Activated T-helper 1 cell treated with anti-CD3 and anti-CD28 coated beads, Interleukin-12 subunit alpha, Interleukin-12 subunit beta, Interleukin-2, Interleukin-4 antibody, amounts not matched to agents 30 ng/mL and 10 ng/mL and 1 ng/mL, durations not matched to agents 14 hours and 24 hours and 36 hours (primary cell): ENCODE measurements at regions of chr3 and their contacts with region 1.

Region 1: DNA sequence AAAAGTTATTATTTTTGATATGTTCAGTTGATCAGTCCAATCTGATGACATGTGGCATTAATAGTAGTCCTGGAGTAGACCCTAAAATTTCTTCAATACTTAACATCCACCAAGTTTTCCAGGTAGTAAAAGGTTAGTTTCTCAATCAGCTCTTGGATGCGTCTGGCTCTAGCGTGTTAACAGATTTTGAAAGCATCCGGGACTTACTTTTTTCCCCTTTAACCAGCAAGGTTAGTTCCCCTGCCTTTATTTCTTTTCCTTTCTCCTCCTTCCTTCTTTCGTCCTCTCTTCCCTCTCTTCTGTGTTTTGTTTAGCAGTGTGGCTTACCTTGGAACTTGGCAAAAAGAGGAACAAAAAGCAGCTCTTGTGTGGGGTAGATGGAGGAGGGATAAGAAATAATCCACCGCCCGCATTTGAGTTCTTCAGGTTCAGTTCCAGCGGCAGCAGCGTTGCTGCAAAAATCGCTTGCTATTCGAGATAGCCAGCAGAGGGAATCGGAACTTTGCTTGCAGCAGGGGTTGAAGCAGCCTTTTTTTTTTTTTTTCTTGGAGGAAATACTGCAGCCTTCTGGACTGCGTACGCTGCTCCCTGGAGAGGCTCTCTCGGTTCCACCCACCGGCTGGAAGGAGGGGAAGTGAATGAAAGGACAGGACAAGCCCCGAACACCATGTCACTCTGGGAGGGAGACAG is at the start of gene RBMS3:
- DNase-seq: no peak
- H3K4me3 Mint-ChIP-seq: peak within 1 kb of the TSS; percentile 87
- H3K27ac Mint-ChIP-seq: peak within 1 kb of the TSS; percentile 87
- H3K4me1 Mint-ChIP-seq: peaks cover 42% of the 10 kb centered on the region
- H3K27me3 Mint-ChIP-seq: peaks cover 6% of the 10 kb centered on the region
- total RNA-seq, gene RBMS3: 3.4 and 3.7 TPM in 2 replicates

Region 2: GRCh38 chr3:28840976-28841376 is 439.6 kb before region 1 on chr3:
- intact Hi-C with region 1: loop called (anchors 1 kb)
- DNase-seq: peak; percentile 1
- H3K4me3 Mint-ChIP-seq: no peak overlapping the region
- H3K27ac Mint-ChIP-seq: peak overlapping the region; percentile 56
- H3K4me1 Mint-ChIP-seq: peaks cover 28% of the 10 kb centered on the region
- H3K27me3 Mint-ChIP-seq: no peaks in the 10 kb centered on the region

Region 3: DNA sequence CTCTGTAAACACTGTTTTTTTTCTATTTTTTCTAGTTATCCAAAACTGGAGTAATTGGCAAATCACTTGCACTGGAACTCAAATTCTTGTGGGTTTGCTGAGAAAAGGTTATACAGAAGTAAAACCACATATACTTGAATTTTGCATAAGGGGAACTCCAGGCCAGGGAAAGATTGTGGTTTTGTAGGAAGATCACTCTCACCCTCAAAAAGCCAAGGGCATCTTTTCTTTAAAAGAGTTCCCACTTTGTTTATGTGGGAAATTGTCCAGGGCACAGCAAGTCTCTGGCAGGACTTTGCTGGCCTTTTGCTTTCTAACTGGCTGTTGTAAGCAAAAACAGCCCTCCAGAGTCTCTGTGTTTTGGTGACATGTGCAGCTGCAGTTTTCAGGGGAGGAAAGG is 340.0 kb before region 1 on chr3:
- intact Hi-C with region 1: loop called (anchors 1 kb)
- DNase-seq: no peak
- H3K4me3 Mint-ChIP-seq: peak overlapping the region; percentile 32
- H3K27ac Mint-ChIP-seq: peak overlapping the region; percentile 37
- H3K4me1 Mint-ChIP-seq: peaks cover 38% of the 10 kb centered on the region
- H3K27me3 Mint-ChIP-seq: peaks cover 17% of the 10 kb centered on the region

Region 4: DNA sequence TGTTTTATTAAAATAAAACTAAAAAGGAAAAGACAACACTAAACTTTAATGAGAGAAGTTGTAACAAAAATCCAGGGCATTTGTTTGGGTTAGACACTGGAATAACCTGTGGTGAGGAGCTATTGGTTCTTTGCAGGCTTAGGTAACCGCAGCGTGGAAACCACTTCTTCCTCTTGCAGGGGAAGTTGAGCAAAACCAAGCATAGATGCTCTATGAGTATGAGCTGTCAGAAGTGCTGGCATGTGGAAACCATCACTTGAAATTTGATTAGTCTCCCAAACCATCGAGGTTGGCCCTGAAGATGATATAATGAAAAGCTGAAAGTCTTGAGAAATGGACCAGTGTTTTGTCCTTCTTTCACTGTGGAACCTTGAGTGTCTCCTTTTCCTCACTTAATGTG is 126.7 kb before region 1 on chr3:
- intact Hi-C with region 1: loop called (anchors 10 kb)
- DNase-seq: peak; percentile 62
- H3K4me3 Mint-ChIP-seq: no peak overlapping the region
- H3K27ac Mint-ChIP-seq: no peak overlapping the region
- H3K4me1 Mint-ChIP-seq: peaks cover 13% of the 10 kb centered on the region
- H3K27me3 Mint-ChIP-seq: peaks cover 15% of the 10 kb centered on the region

Region 5: DNA sequence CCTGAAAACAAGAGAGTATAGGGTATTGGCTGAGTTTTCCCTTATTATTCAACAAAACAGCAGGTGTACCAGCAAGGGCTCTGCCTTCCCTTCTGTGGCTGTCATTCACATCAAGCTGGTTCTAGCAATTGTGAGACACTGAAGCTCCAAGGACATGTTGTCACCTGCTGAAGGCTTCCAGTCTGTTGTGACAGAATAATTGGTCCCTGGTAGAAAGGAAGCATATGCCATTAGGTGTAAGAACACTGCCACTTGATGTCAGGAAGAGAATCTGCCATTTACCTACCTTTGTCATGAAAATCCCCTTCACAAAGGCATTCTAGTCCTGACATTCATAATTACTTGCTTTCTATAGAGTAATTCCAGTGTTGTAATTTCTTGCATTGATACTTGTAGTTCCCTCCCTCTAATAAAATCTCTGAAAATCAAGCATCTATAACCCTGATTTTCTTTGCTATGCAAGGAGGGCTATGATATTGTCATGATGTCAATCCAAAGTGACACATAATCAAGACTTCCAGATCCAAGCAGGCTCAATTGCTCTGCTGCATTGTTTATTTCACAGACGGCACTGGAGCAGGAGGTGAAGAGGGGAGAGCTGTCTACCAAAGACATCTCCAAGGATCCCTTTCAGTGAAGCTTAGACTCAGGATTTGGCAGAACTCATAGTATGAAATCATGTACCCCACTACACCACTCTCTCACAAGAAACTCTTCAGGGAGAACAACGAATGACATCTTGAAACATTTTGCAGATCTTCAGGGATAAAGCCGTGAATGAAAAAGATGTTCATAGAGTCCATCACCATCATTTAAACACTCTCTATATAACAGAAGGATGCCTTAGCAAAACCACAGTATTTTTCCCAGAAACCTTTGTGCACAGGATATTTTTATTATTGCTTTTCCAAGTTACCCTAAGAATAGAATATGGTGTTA is 425.6 kb after region 1 on chr3:
- intact Hi-C with region 1: no loop called
- DNase-seq: no peak
- H3K4me3 Mint-ChIP-seq: no peak overlapping the region
- H3K27ac Mint-ChIP-seq: no peak overlapping the region
- H3K4me1 Mint-ChIP-seq: no peaks in the 10 kb centered on the region
- H3K27me3 Mint-ChIP-seq: no peaks in the 10 kb centered on the region